ENCODE measurements at regions of chr22 and their contacts with region 1.

Region 1: GRCh38 chr22:31399211-31400028 is at the start of gene DRG1:
- DNase-seq: peak; percentile 98
- H3K4me3 Mint-ChIP-seq: peak within 1 kb of the TSS; percentile 93
- H3K27ac Mint-ChIP-seq: peak within 1 kb of the TSS; percentile 84
- H3K4me1 Mint-ChIP-seq: peaks cover 23% of the 10 kb centered on the region
- H3K27me3 Mint-ChIP-seq: peaks cover 2% of the 10 kb centered on the region
- total RNA-seq, gene DRG1: 97.1 to 116 TPM

Region 2: DNA sequence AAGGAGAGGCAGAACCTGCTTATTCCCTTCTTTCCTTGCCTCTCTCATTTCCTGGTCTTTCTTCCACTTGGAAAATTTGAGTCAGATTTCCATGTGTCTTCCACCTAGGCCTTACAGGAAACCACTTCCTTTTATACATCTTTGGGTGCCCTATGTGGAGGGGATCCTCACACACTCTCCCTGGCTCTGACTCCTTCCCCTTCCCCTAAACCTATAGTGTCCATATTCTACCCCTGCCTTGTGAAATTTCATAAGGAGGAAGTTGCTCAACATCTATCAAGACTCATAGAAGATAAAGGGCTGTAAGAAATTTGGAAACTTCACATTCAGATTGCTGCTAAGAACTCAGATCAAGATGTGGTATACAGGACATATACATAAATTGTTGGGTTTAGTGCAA is 409.9 kb before region 1 on chr22:
- CTCF ChIA-PET with region 1: no interaction called
- POLR2A ChIA-PET with region 1: no interaction called
- intact Hi-C with region 1: no loop called
- DNase-seq: no peak
- H3K4me3 Mint-ChIP-seq: no peak overlapping the region
- H3K27ac Mint-ChIP-seq: no peak overlapping the region
- H3K4me1 Mint-ChIP-seq: no peaks in the 10 kb centered on the region
- H3K27me3 Mint-ChIP-seq: peaks cover 3% of the 10 kb centered on the region

Region 3: GRCh38 chr22:31345331-31346254 is 53.8 kb before region 1 on chr22:
- CTCF ChIA-PET with region 1: interaction called, 5 read pairs
- POLR2A ChIA-PET with region 1: interaction called, 19 read pairs
- intact Hi-C with region 1: loop called (anchors 1 kb)
- DNase-seq: peak; percentile 91
- H3K4me3 Mint-ChIP-seq: peak overlapping the region; percentile 89
- H3K27ac Mint-ChIP-seq: peak overlapping the region; percentile 91
- H3K4me1 Mint-ChIP-seq: peaks cover 46% of the 10 kb centered on the region
- H3K27me3 Mint-ChIP-seq: no peaks in the 10 kb centered on the region

Region 4: DNA sequence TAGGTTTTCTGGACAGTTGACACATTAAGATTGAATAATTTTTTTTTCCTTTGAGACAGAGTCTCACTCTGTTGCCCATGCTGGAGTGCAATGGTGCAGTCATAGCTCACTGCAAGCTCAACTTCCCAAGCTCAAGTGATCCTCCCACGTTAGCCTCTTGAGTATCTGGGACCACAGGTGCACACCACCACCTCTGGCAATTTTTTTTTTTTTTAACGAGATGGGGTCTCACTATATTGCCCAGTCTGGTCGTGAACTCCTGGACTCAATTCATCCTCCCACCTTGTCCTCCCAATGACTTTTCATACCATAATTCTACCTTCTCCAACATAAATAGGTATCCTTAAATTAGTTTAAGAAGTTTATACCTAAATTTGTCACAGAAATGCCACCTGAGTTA is 81.7 kb after region 1 on chr22:
- CTCF ChIA-PET with region 1: no interaction called
- POLR2A ChIA-PET with region 1: no interaction called
- intact Hi-C with region 1: no loop called
- DNase-seq: no peak
- H3K4me3 Mint-ChIP-seq: no peak overlapping the region
- H3K27ac Mint-ChIP-seq: no peak overlapping the region
- H3K4me1 Mint-ChIP-seq: peaks cover 38% of the 10 kb centered on the region
- H3K27me3 Mint-ChIP-seq: no peaks in the 10 kb centered on the region

Measured in activated CD4-positive, alpha-beta memory T cell treated with anti-CD3 and anti-CD28 coated beads for 36 hours (primary cell).